Activated CD4-positive, alpha-beta T cell treated with anti-CD3 and anti-CD28 coated beads for 36 hours (primary cell): ENCODE measurements at regions of chr1 and their contacts with region 1.

Region 1: DNA sequence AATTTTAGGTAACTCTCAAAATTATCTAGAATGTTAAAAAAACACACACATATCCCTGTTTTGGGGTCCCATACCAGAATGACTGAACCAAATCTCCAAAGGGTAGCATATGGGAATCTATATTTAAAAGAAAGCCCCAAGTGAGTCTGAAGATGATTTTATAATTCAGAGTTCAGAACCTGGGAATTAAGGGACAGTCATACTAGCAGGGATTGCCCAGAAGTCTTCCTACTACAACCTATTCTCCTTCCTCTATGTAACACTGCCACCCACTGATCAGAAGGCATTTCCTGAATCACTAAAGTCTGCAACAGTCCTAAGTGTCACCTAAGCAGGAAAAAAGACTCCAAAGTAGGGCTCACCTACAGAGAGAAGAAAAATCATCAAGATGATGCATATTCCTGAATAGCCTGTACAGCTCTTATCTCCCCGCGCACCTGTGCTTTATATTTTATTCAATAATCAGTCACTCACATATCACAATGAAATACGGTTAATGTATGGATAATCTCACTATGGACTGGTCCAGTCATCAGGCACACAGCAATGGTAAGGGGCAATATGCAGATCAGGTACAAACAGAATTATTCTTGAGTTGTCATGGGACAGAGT is 4.9 kb downstream of the RGS1 start:
- DNase-seq: no peak
- ATAC-seq: peak; percentile 38
- H3K4me3 Mint-ChIP-seq: peak overlapping the region; percentile 76
- H3K27ac Mint-ChIP-seq: no peak overlapping the region
- H3K4me1 Mint-ChIP-seq: peaks cover 50% of the 10 kb centered on the region
- H3K27me3 Mint-ChIP-seq: no peaks in the 10 kb centered on the region

Region 2: DNA sequence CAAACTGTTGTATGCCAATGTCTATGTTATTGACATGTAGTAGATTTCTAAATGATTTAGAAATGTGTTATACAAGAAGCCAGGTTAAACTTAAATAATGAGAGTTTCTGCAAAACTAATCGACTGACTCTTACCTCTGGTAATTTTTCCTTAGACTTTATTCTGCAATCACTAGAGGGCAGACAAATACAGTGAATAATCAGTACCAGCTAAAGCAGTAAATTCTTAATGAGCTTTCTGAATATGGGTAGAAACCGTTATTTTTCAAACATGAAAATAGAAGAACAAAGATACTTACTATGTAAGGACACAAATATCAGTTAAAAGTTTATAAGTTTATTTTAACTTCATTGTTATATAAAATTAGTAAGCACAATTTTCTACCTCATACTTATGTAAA is 102.8 kb before region 1 on chr1:
- CTCF ChIA-PET with region 1: interaction called, 19 read pairs
- POLR2A ChIA-PET with region 1: no interaction called
- intact Hi-C with region 1: loop called (anchors 1 kb)
- DNase-seq: no peak
- ATAC-seq: peak; percentile 67
- H3K4me3 Mint-ChIP-seq: no peak overlapping the region
- H3K27ac Mint-ChIP-seq: no peak overlapping the region
- H3K4me1 Mint-ChIP-seq: peaks cover 2% of the 10 kb centered on the region
- H3K27me3 Mint-ChIP-seq: no peaks in the 10 kb centered on the region

Region 3: GRCh38 chr1:192539297-192540092 is 41.0 kb before region 1 on chr1:
- CTCF ChIA-PET with region 1: interaction called, 3 read pairs
- POLR2A ChIA-PET with region 1: no interaction called
- intact Hi-C with region 1: loop called in 1 of 2 experiments (anchors 5 kb)
- DNase-seq: no peak
- ATAC-seq: no peak
- H3K4me3 Mint-ChIP-seq: peak overlapping the region; percentile 4
- H3K27ac Mint-ChIP-seq: peak overlapping the region; percentile 76
- H3K4me1 Mint-ChIP-seq: peaks cover 41% of the 10 kb centered on the region
- H3K27me3 Mint-ChIP-seq: no peaks in the 10 kb centered on the region

Region 4: GRCh38 chr1:192550922-192551534 is 29.4 kb before region 1 on chr1:
- CTCF ChIA-PET with region 1: interaction called, 6 read pairs
- POLR2A ChIA-PET with region 1: no interaction called
- intact Hi-C with region 1: loop called (anchors 1 to 2 kb)
- DNase-seq: peak; percentile 32
- ATAC-seq: peak; percentile 88
- H3K4me3 Mint-ChIP-seq: peak overlapping the region; percentile 20
- H3K27ac Mint-ChIP-seq: peak overlapping the region; percentile 76
- H3K4me1 Mint-ChIP-seq: peaks cover 53% of the 10 kb centered on the region
- H3K27me3 Mint-ChIP-seq: no peaks in the 10 kb centered on the region

Region 5: GRCh38 chr1:192609110-192610079 is 28.9 kb after region 1 on chr1:
- CTCF ChIA-PET with region 1: interaction called, 6 read pairs
- POLR2A ChIA-PET with region 1: no interaction called
- intact Hi-C with region 1: loop called (anchors 2 kb)
- DNase-seq: peak; percentile 78
- ATAC-seq: peak; percentile 100
- H3K4me3 Mint-ChIP-seq: peak overlapping the region; percentile 35
- H3K27ac Mint-ChIP-seq: peak overlapping the region; percentile 69
- H3K4me1 Mint-ChIP-seq: peaks cover 19% of the 10 kb centered on the region
- H3K27me3 Mint-ChIP-seq: no peaks in the 10 kb centered on the region

Region 6: GRCh38 chr1:193121616-193122593 is 541.4 kb after region 1 on chr1 and contains the start of gene CDC73:
- CTCF ChIA-PET with region 1: no interaction called
- POLR2A ChIA-PET with region 1: no interaction called
- intact Hi-C with region 1: loop called in 1 of 2 experiments (anchors 10 kb)
- DNase-seq: peak; percentile 99
- ATAC-seq: peak; percentile 94
- H3K4me3 Mint-ChIP-seq: peak within 1 kb of the TSS; percentile 91
- H3K27ac Mint-ChIP-seq: peak within 1 kb of the TSS; percentile 96
- H3K4me1 Mint-ChIP-seq: peaks cover 51% of the 10 kb centered on the region
- H3K27me3 Mint-ChIP-seq: no peaks in the 10 kb centered on the region
- total RNA-seq, gene CDC73: 40.8 to 52.4 TPM